HCT116 (cell line): ENCODE measurements at regions of chr15 and their contacts with region 1.

Region 1: DNA sequence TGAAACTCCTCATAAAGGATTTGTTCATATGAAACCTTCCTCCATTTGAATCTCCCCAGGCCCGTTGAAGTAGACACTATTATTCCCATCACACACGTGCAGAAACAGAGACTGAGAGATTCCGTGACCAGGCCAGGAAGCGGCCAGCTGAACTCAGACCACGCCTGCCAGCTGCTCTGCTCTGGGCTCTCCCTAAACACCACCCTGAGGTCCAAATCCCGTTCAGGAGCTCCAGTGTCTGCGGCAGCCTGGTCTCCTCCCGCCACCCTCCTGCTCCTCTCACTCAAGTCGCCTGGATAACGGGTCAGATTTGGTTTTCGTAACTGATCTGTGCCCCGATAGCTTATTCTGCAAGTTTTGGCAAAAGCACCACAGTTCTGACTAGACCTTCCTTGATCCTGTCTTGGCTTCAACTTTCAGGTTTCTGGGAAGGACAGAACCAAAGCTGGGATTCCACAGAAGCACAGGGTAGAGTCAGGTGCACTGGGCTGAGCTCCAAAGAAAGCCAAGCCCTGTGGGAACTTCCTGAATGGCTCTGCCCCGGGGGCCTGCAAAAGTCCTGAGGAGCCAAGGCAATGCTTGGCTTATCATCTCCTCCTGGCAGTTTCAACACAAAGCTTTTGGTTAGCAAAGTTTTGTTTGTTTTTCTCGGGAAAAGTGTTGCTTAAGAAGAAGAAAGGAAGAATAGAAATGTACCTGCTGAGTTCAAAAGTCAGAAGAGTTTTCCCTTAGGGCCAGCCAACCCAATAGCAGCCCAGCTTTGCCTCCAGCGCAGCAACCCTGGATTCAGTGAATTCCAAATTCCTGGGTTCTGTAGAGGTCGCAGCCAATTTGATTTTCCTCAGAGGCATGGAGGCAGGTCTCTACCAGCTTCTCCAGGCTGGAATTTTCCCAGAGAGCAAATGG is 53.8 kb upstream of the SNRPA1 start:
- DNase-seq: no peak
- ATAC-seq: no peak
- H3K4me3 ChIP-seq: no peak overlapping the region
- H3K27ac ChIP-seq: no peak overlapping the region
- H3K4me1 ChIP-seq: 0 out of 4 replicates have a peak, but pooled peaks cover 0 to 2% of the 10 kb centered on the region in 2 experiments
- H3K27me3 ChIP-seq: no peaks in the 10 kb centered on the region
- CTCF ChIP-seq: no peak
- POLR2A ChIP-seq: no peak
- RAD21 ChIP-seq: no peak

Region 2: GRCh38 chr15:101368086-101368780 is 19.3 kb after region 1 on chr15:
- CTCF ChIA-PET with region 1: no interaction called
- POLR2A ChIA-PET with region 1: no interaction called
- RAD21 ChIA-PET with region 1: no interaction called
- intact Hi-C with region 1: no loop called
- DNase-seq: no peak
- ATAC-seq: no peak
- H3K4me3 ChIP-seq: no peak overlapping the region
- H3K27ac ChIP-seq: no peak overlapping the region
- H3K4me1 ChIP-seq: no peaks in the 10 kb centered on the region
- H3K27me3 ChIP-seq: no peaks in the 10 kb centered on the region
- CTCF ChIP-seq: no peak
- POLR2A ChIP-seq: no peak
- RAD21 ChIP-seq: no peak

Region 3: DNA sequence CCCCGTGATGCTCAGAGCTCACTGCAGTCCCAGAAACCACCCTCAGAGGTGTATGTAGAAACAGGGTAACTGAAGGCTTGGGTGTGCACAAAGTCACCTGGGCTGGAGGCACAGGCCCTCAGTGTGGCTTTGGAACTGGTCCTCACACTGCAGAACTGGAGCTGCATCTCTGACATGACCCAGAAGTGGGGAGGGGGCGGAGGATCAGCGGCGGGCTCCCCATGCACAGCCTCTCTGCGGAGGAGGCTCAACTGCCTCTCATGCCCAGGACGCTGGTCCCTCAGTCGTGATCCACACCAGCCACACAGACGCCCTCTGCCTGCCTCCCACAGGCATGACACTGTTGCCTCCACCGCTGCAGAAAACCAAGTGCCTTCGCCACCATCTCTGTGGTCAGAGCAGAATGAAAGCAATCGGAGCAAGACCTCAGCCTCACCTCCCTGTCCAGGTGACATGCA is 229.6 kb after region 1 on chr15:
- CTCF ChIA-PET with region 1: no interaction called
- POLR2A ChIA-PET with region 1: no interaction called
- RAD21 ChIA-PET with region 1: no interaction called
- intact Hi-C with region 1: loop called (anchors 10 kb)
- DNase-seq: peak; percentile 44
- ATAC-seq: peak; percentile 83
- H3K4me3 ChIP-seq: no peak overlapping the region
- H3K27ac ChIP-seq: no peak overlapping the region
- H3K4me1 ChIP-seq: peaks cover 11 to 44% of the 10 kb centered on the region in 2 experiments; a peak in 3 of 4 replicates
- H3K27me3 ChIP-seq: no peaks in the 10 kb centered on the region
- CTCF ChIP-seq: peak; percentile 36 to 72 (median 62); a peak in 5 of 6 replicates
- POLR2A ChIP-seq: no peak
- RAD21 ChIP-seq: peak; percentile 62